ENCODE measurements at regions of chr11 and their contacts with region 1.

Region 1: GRCh38 chr11:17298302-17298701 is 21.8 kb downstream of the NUCB2 start:
- DNase-seq: peak; percentile 84
- H3K4me3 Mint-ChIP-seq: no peak overlapping the region
- H3K27ac Mint-ChIP-seq: no peak overlapping the region
- H3K4me1 Mint-ChIP-seq: peaks cover 36% of the 10 kb centered on the region
- H3K27me3 Mint-ChIP-seq: no peaks in the 10 kb centered on the region

Region 2: GRCh38 chr11:16902781-16903378 is 395.4 kb before region 1 on chr11:
- CTCF ChIA-PET with region 1: no interaction called
- POLR2A ChIA-PET with region 1: no interaction called
- intact Hi-C with region 1: loop called (anchors 2 kb)
- DNase-seq: peak; percentile 29
- H3K4me3 Mint-ChIP-seq: peak overlapping the region; percentile 31
- H3K27ac Mint-ChIP-seq: peak overlapping the region; percentile 95
- H3K4me1 Mint-ChIP-seq: peaks cover 48% of the 10 kb centered on the region
- H3K27me3 Mint-ChIP-seq: no peaks in the 10 kb centered on the region

Region 3: GRCh38 chr11:17230867-17231851 is 67.1 kb before region 1 on chr11:
- CTCF ChIA-PET with region 1: interaction called, 14 read pairs
- POLR2A ChIA-PET with region 1: no interaction called
- intact Hi-C with region 1: loop called (anchors 1 kb)
- DNase-seq: peak; percentile 63
- H3K4me3 Mint-ChIP-seq: no peak overlapping the region
- H3K27ac Mint-ChIP-seq: no peak overlapping the region
- H3K4me1 Mint-ChIP-seq: peaks cover 13% of the 10 kb centered on the region
- H3K27me3 Mint-ChIP-seq: peaks cover 11% of the 10 kb centered on the region

Region 4: GRCh38 chr11:17276236-17277023 is 21.9 kb before region 1 on chr11 and contains the start of gene NUCB2:
- CTCF ChIA-PET with region 1: interaction called, 5 read pairs
- POLR2A ChIA-PET with region 1: interaction called, 3 read pairs
- intact Hi-C with region 1: loop called (anchors 1 kb)
- DNase-seq: peak; percentile 97
- H3K4me3 Mint-ChIP-seq: peak within 1 kb of the TSS; percentile 89
- H3K27ac Mint-ChIP-seq: peak within 1 kb of the TSS; percentile 87
- H3K4me1 Mint-ChIP-seq: peaks cover 32% of the 10 kb centered on the region
- H3K27me3 Mint-ChIP-seq: no peaks in the 10 kb centered on the region
- total RNA-seq, gene NUCB2: 38.1 to 38.2 TPM

Region 5: DNA sequence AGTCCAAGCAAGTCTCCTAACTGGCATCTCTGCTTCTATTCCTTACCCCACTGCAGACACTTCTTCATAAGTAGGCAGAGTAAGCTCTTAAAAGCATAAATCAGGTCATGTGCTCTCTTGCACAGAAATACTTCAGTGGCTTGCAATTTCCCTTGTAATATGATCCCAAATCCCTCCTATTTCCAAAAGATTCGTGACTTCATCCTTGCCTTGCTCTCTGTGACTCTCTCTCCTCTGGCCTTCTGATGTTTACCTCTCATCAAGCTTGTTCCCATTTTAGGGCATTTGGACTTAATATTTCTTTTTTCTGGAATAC is 15.9 kb after region 1 on chr11:
- CTCF ChIA-PET with region 1: no interaction called
- POLR2A ChIA-PET with region 1: no interaction called
- intact Hi-C with region 1: loop called (anchors 2 kb)
- DNase-seq: no peak
- H3K4me3 Mint-ChIP-seq: no peak overlapping the region
- H3K27ac Mint-ChIP-seq: no peak overlapping the region
- H3K4me1 Mint-ChIP-seq: no peaks in the 10 kb centered on the region
- H3K27me3 Mint-ChIP-seq: no peaks in the 10 kb centered on the region

Region 6: DNA sequence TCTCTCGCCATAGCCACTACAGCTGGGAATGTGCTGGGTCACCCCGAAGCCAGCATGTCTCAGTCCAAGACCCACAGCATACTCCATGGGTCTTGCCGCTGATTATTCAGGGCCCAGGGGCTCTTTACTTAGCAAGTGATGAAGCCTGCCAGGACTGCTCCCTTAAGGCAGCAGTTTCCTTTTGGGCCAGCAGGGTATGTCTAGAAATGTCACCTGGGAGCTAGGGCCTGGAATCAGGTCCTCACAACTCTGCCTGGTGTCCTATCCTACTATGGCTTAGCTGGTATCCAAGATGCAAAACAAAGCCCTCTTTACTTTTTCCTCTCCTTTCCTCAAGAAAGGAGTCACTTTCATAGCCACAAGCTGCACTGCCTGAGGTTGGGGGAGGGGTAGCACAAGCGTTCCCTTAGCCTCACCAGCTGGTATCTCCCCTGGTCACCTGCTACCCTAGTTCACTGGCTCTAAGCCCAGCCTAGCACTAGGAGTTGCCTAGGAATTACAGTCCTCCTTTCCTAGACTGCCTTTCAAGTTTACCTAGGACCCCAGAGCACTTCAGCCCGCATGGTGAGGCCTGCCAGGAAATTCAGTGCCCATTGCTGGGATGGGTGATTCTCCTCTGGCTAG is 30.7 kb after region 1 on chr11:
- CTCF ChIA-PET with region 1: no interaction called
- POLR2A ChIA-PET with region 1: no interaction called
- intact Hi-C with region 1: no loop called
- DNase-seq: no peak
- H3K4me3 Mint-ChIP-seq: no peak overlapping the region
- H3K27ac Mint-ChIP-seq: no peak overlapping the region
- H3K4me1 Mint-ChIP-seq: no peaks in the 10 kb centered on the region
- H3K27me3 Mint-ChIP-seq: no peaks in the 10 kb centered on the region

Region 7: DNA sequence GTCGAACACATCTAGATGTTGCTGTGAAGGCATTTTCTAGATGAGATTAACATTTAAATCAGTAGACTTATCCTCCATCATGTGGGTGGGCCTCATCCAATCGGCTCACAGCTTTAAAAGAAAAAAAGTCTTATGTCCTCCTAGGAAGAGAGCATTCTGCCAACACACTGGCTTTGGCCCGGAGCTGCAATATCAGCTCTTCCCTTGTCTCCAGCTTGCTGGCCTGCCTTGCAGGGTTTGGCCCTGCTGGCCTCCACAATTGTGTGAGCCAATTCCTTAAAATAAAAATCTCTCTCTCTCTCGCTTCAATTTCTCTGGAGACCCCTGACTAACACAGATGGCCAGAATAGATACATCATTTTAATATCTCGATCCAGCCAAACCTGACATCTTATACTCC is 191.4 kb after region 1 on chr11:
- CTCF ChIA-PET with region 1: no interaction called
- POLR2A ChIA-PET with region 1: no interaction called
- intact Hi-C with region 1: no loop called
- DNase-seq: no peak
- H3K4me3 Mint-ChIP-seq: no peak overlapping the region
- H3K27ac Mint-ChIP-seq: no peak overlapping the region
- H3K4me1 Mint-ChIP-seq: no peaks in the 10 kb centered on the region
- H3K27me3 Mint-ChIP-seq: peaks cover 7% of the 10 kb centered on the region

Measured in activated CD4-positive, alpha-beta memory T cell treated with anti-CD3 and anti-CD28 coated beads for 36 hours (primary cell).